T-cell (primary cell): ENCODE measurements at regions of chr5 and their contacts with region 1.

Region 1: DNA sequence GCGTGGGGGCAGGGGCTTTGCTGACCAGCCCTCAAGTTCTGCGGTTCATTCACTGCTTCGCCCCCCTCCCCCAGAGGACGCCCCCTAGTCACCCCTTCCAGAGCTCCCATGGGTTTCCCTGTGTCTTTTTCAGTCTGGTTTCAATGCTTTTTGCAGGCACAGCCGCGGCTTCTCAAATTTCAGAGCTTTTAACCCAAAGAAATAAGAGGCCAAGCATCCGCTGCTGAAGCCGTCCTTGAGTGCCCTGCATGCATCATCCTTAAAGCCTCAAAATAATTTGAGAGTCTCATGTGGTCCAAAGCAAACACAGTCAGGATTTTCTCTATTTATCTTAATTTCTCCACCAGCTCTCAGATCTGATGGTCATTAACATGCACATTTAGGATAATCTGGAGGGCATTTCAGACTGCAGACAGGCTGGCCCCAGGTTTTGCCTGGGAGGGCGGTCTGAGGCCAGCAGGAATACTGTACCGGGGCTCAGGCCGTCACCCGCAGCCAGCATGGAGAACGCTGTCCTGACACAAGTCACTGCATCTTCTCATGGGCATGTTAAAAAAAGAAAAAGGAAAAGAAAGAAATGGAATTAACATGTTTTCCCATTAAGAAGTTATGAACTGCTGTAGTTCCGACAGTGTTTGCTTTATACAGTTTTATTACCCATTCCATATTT is 420.8 kb upstream of the IRX4 start:
- DNase-seq: no peak
- ATAC-seq: no peak
- H3K4me3 ChIP-seq: no peak overlapping the region
- H3K4me3 Mint-ChIP-seq: no peak overlapping the region
- H3K27ac ChIP-seq: no peak overlapping the region
- H3K27ac Mint-ChIP-seq: no peak overlapping the region
- H3K4me1 ChIP-seq: no peaks in the 10 kb centered on the region
- H3K4me1 Mint-ChIP-seq: no peaks in the 10 kb centered on the region
- H3K27me3 ChIP-seq: peaks cover 0 to 20% of the 10 kb centered on the region in 2 experiments
- H3K27me3 Mint-ChIP-seq: peaks cover 5 to 10% of the 10 kb centered on the region in 2 donors

Region 2: GRCh38 chr5:2134543-2135292 is 168.8 kb before region 1 on chr5:
- CTCF ChIA-PET with region 1: no interaction called
- POLR2A ChIA-PET with region 1: no interaction called
- DNase-seq: no peak
- ATAC-seq: no peak
- H3K4me3 ChIP-seq: no peak overlapping the region
- H3K4me3 Mint-ChIP-seq: no peak overlapping the region
- H3K27ac ChIP-seq: no peak overlapping the region
- H3K27ac Mint-ChIP-seq: no peak overlapping the region
- H3K4me1 ChIP-seq: no peaks in the 10 kb centered on the region
- H3K4me1 Mint-ChIP-seq: no peaks in the 10 kb centered on the region
- H3K27me3 ChIP-seq: peaks cover 0 to 19% of the 10 kb centered on the region in 2 experiments
- H3K27me3 Mint-ChIP-seq: peaks cover 8 to 21% of the 10 kb centered on the region in 2 donors

Region 3: DNA sequence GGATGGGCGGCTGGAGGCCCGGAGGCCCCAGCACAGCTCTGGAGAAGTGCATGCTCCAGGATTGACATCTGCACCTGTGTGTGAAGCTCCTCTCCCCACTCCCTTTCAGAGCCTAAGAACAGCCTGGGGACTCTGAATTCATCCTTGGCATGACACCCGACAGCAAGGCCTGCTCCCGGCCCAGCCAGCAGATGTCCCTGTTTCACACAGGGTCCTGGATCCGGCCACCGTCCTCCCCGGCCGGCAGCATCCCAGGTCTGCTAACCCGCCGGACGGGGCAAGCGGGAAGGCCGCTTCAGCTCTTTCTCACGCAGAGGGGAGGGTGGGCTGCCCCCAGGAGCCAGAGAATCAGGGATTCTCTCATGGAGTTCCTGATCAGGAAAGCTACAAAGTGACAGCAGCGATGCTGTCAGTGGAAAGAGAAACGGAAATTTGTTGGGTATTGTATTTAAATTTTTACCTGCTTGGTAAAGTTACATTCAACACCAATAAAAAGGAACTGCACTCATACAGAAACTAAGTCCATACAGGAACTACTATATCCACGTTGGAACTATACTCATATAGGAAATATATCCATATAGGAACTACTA is 95.5 kb before region 1 on chr5:
- CTCF ChIA-PET with region 1: no interaction called
- POLR2A ChIA-PET with region 1: no interaction called
- DNase-seq: no peak
- ATAC-seq: no peak
- H3K4me3 ChIP-seq: no peak overlapping the region
- H3K4me3 Mint-ChIP-seq: no peak overlapping the region
- H3K27ac ChIP-seq: no peak overlapping the region
- H3K27ac Mint-ChIP-seq: no peak overlapping the region
- H3K4me1 ChIP-seq: no peaks in the 10 kb centered on the region
- H3K4me1 Mint-ChIP-seq: no peaks in the 10 kb centered on the region
- H3K27me3 ChIP-seq: peaks cover 0 to 17% of the 10 kb centered on the region in 2 experiments
- H3K27me3 Mint-ChIP-seq: peaks cover 15 to 18% of the 10 kb centered on the region in 2 donors

Region 4: GRCh38 chr5:2270467-2270866 is 33.1 kb before region 1 on chr5:
- CTCF ChIA-PET with region 1: no interaction called
- POLR2A ChIA-PET with region 1: interaction called in 1 of 2 experiments, 15 read pairs
- DNase-seq: no peak
- ATAC-seq: no peak
- H3K4me3 ChIP-seq: no peak overlapping the region
- H3K4me3 Mint-ChIP-seq: no peak overlapping the region
- H3K27ac ChIP-seq: no peak overlapping the region
- H3K27ac Mint-ChIP-seq: peak overlapping the region in 1 of 2 donors; percentile 43
- H3K4me1 ChIP-seq: no peaks in the 10 kb centered on the region
- H3K4me1 Mint-ChIP-seq: no peaks in the 10 kb centered on the region
- H3K27me3 ChIP-seq: peaks cover 0 to 11% of the 10 kb centered on the region in 2 experiments
- H3K27me3 Mint-ChIP-seq: peaks cover 3 to 9% of the 10 kb centered on the region in 2 donors